ENCODE measurements at regions of chr16 and their contacts with region 1.

Region 1: GRCh38 chr16:3134564-3135417 is at the start of gene ZNF213:
- DNase-seq: peak; percentile 70 to 97 (median 95)
- ATAC-seq: peak; percentile 98
- H3K4me3 ChIP-seq: peak within 1 kb of the TSS; percentile 94
- H3K4me3 Mint-ChIP-seq: peak within 1 kb of the TSS; percentile 93 to 99 (median 96)
- H3K27ac ChIP-seq: peak within 1 kb of the TSS; percentile 93
- H3K27ac Mint-ChIP-seq: peak within 1 kb of the TSS; percentile 94 to 98 (median 97)
- H3K4me1 ChIP-seq: peaks cover 10 to 11% of the 10 kb centered on the region in 2 donors
- H3K4me1 Mint-ChIP-seq: peaks cover 12 to 45% (median 34%) of the 10 kb centered on the region in 7 donors
- H3K27me3 ChIP-seq: no peaks in the 10 kb centered on the region
- H3K27me3 Mint-ChIP-seq: no peaks in the 10 kb centered on the region
- total RNA-seq, gene ZNF213: 3.8 to 14.0 (median 11.8) TPM

Region 2: DNA sequence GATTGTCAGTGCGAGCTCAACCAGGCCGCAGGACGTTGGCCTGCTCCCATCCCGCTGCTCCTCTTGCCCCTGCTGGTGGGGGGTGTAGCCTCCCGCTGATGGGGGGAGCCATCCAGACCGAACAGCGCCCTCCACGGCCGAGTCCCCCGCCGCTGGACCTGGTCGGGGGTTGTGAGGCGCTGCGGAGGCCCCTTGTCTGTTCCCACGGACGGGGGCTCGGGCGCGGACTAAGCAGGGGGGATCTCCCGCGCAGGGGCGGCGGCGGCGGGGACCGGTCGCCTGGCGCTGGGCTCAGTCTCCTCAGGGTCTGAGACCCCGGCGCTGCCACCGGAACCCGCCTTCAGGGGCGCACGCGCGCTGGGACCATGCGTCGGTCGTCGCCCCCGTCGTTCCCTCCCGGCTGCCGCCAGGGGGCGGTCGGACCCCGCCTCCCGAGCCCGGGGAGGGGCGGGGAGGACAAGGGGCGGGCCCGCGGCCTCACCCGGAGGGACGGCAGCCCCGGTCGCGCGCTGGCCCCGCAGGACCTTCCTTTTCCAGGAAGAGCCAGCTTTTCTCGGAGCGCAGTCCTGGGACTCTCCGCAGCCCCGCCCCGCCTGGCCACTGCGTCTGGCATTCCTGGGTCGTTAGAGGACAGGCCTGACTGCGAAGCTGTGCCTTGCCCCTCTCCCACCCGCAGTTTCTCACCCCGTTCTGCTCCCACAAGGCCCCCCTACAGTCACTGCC is 75.6 kb before region 1 on chr16:
- CTCF ChIA-PET with region 1: interaction called, 244 read pairs
- POLR2A ChIA-PET with region 1: interaction called, 182 read pairs
- intact Hi-C with region 1: loop called (anchors 1 kb)
- DNase-seq: peak; percentile 76 to 97 (median 89)
- ATAC-seq: peak; percentile 95
- H3K4me3 ChIP-seq: peak overlapping the region; percentile 77
- H3K4me3 Mint-ChIP-seq: peak overlapping the region; percentile 79 to 95 (median 88)
- H3K27ac ChIP-seq: peak overlapping the region; percentile 89
- H3K27ac Mint-ChIP-seq: peak overlapping the region in 8 of 9 donors; percentile 72 to 91 (median 85)
- H3K4me1 ChIP-seq: peaks cover 25 to 46% of the 10 kb centered on the region in 2 donors
- H3K4me1 Mint-ChIP-seq: peaks cover 39 to 63% (median 47%) of the 10 kb centered on the region in 7 donors
- H3K27me3 ChIP-seq: no peaks in the 10 kb centered on the region
- H3K27me3 Mint-ChIP-seq: no peaks in the 10 kb centered on the region

Region 3: GRCh38 chr16:3106205-3106928 is 28.4 kb before region 1 on chr16:
- CTCF ChIA-PET with region 1: interaction called, 233 read pairs
- POLR2A ChIA-PET with region 1: interaction called, 40 read pairs
- intact Hi-C with region 1: loop called (anchors 1 kb)
- DNase-seq: peak; percentile 77 to 92 (median 85)
- ATAC-seq: peak; percentile 97
- H3K4me3 ChIP-seq: peak overlapping the region; percentile 76
- H3K4me3 Mint-ChIP-seq: peak overlapping the region; percentile 83 to 94 (median 87)
- H3K27ac ChIP-seq: peak overlapping the region; percentile 89
- H3K27ac Mint-ChIP-seq: peak overlapping the region; percentile 82 to 96 (median 92)
- H3K4me1 ChIP-seq: peaks cover 13 to 23% of the 10 kb centered on the region in 2 donors
- H3K4me1 Mint-ChIP-seq: peaks cover 26 to 45% (median 35%) of the 10 kb centered on the region in 7 donors
- H3K27me3 ChIP-seq: no peaks in the 10 kb centered on the region
- H3K27me3 Mint-ChIP-seq: peaks cover 0 to 7% (median 0%) of the 10 kb centered on the region in 5 donors

Region 4: GRCh38 chr16:3158471-3159314 is 23.9 kb after region 1 on chr16:
- CTCF ChIA-PET with region 1: interaction called, 9 read pairs
- POLR2A ChIA-PET with region 1: interaction called, 95 read pairs
- intact Hi-C with region 1: loop called (anchors 2 kb)
- DNase-seq: peak; percentile 80 to 98 (median 91)
- ATAC-seq: peak; percentile 97
- H3K4me3 ChIP-seq: peak overlapping the region; percentile 86
- H3K4me3 Mint-ChIP-seq: peak overlapping the region; percentile 87 to 94 (median 92)
- H3K27ac ChIP-seq: peak overlapping the region; percentile 86
- H3K27ac Mint-ChIP-seq: peak overlapping the region; percentile 90 to 99 (median 95)
- H3K4me1 ChIP-seq: peaks cover 5 to 9% of the 10 kb centered on the region in 2 donors
- H3K4me1 Mint-ChIP-seq: peaks cover 10 to 42% (median 28%) of the 10 kb centered on the region in 7 donors
- H3K27me3 ChIP-seq: no peaks in the 10 kb centered on the region
- H3K27me3 Mint-ChIP-seq: peaks cover 0 to 26% (median 0%) of the 10 kb centered on the region in 5 donors

Region 5: GRCh38 chr16:3400779-3401688 is 266.2 kb after region 1 on chr16 and contains the starts of genes ZNF174 and ZSCAN32:
- CTCF ChIA-PET with region 1: no interaction called
- POLR2A ChIA-PET with region 1: interaction called, 5 read pairs
- intact Hi-C with region 1: loop called in 1 of 2 experiments (anchors 1 kb)
- DNase-seq: peak; percentile 90 to 99 (median 98)
- ATAC-seq: peak; percentile 99
- H3K4me3 ChIP-seq: peak within 1 kb of the TSS; percentile 87
- H3K4me3 Mint-ChIP-seq: peak within 1 kb of the TSS; percentile 84 to 97 (median 94)
- H3K27ac ChIP-seq: peak within 1 kb of the TSS; percentile 89
- H3K27ac Mint-ChIP-seq: peak within 1 kb of the TSS; percentile 88 to 95 (median 91)
- H3K4me1 ChIP-seq: peaks cover 20 to 22% of the 10 kb centered on the region in 2 donors
- H3K4me1 Mint-ChIP-seq: peaks cover 14 to 77% (median 65%) of the 10 kb centered on the region in 7 donors
- H3K27me3 ChIP-seq: no peaks in the 10 kb centered on the region
- H3K27me3 Mint-ChIP-seq: no peaks in the 10 kb centered on the region
- total RNA-seq, gene ZNF174: 4.7 to 22.8 (median 13.5) TPM
- total RNA-seq, gene ZSCAN32: 9.7 to 31.1 (median 19.0) TPM